Caco-2 (cell line): ENCODE measurements at regions of chr14 and their contacts with region 1.

Region 1: GRCh38 chr14:82447586-82447985 is 913.9 kb upstream of the SEL1L start:
- DNase-seq: peak; percentile 25 to 33
- H3K4me3 ChIP-seq: no peak overlapping the region
- H3K4me3 Mint-ChIP-seq: no peak overlapping the region
- H3K27ac Mint-ChIP-seq: no peak overlapping the region
- H3K4me1 ChIP-seq: no peaks in the 10 kb centered on the region
- H3K4me1 Mint-ChIP-seq: no peaks in the 10 kb centered on the region
- H3K27me3 ChIP-seq: no peaks in the 10 kb centered on the region
- H3K27me3 Mint-ChIP-seq: no peaks in the 10 kb centered on the region
- CTCF ChIP-seq: peak in 1 of 2 experiments; percentile 25

Region 2: DNA sequence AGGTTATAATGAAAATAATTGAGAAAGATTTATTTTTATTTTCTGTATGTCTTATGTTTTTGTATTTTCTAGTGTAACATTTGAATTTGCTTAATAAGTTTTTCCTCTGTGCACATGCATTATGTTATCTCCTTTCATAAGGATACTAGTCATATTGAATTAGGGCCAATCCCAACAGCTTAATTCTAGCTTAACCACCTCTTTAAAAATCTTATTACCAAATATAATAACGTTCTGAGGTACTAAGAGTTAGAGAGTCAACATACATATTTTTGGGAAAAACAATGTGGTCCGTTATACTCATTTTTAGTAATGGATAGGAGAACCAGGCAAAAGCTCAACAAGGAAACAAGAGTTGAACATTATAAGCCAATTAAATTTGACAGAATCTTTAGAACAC is 68.3 kb before region 1 on chr14:
- CTCF ChIA-PET with region 1: no interaction called
- POLR2A ChIA-PET with region 1: no interaction called
- intact Hi-C with region 1: no loop called
- DNase-seq: no peak
- H3K4me3 ChIP-seq: no peak overlapping the region
- H3K4me3 Mint-ChIP-seq: no peak overlapping the region
- H3K27ac Mint-ChIP-seq: no peak overlapping the region
- H3K4me1 ChIP-seq: no peaks in the 10 kb centered on the region
- H3K4me1 Mint-ChIP-seq: no peaks in the 10 kb centered on the region
- H3K27me3 ChIP-seq: no peaks in the 10 kb centered on the region
- H3K27me3 Mint-ChIP-seq: no peaks in the 10 kb centered on the region
- CTCF ChIP-seq: no peak

Region 3: DNA sequence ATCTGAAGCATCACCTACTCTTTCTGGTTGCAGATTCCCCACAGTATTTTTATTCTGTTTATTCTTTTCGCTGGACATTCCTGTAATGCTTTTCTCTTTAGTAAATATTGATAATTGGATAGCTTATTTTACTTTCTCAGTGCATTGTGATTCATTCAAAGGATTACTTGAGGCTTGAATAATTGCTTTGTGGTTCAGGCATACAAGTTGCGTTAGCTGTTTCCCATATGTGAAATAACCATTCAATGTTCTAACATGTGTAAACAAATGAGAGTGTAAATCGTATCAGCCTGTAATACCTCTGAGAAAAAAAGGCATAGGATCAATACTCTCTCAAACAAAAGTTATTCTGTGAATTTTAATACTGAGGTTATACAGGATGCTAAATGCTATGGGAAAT is 90.2 kb after region 1 on chr14:
- CTCF ChIA-PET with region 1: no interaction called
- POLR2A ChIA-PET with region 1: no interaction called
- intact Hi-C with region 1: loop called (anchors 5 kb)
- DNase-seq: no peak
- H3K4me3 ChIP-seq: no peak overlapping the region
- H3K4me3 Mint-ChIP-seq: no peak overlapping the region
- H3K27ac Mint-ChIP-seq: no peak overlapping the region
- H3K4me1 ChIP-seq: peaks cover 4% of the 10 kb centered on the region; the same call in 1 of the 2 replicates
- H3K4me1 Mint-ChIP-seq: no peaks in the 10 kb centered on the region
- H3K27me3 ChIP-seq: no peaks in the 10 kb centered on the region
- H3K27me3 Mint-ChIP-seq: no peaks in the 10 kb centered on the region
- CTCF ChIP-seq: no peak

Region 4: DNA sequence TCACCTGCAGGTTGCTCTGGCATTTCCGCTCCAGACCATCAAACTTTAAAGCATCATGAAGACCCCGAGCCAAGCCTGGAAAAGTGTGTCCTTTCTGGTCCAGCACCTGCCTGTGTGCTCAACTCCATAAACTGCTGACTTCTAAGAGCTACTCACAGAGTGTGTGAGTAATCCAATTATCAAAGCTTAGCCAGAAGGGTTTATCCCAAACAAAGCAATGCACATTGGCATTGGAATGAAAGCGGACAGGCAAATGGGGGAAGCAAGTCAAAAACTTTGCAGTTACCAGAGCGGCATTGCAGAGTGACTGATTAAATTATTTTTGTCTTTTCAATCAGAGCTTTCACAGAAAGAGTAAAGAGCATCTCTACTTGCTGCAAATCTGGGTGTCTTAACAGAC is 348.5 kb after region 1 on chr14:
- CTCF ChIA-PET with region 1: no interaction called
- POLR2A ChIA-PET with region 1: no interaction called
- intact Hi-C with region 1: no loop called
- DNase-seq: no peak
- H3K4me3 ChIP-seq: no peak overlapping the region
- H3K4me3 Mint-ChIP-seq: no peak overlapping the region
- H3K27ac Mint-ChIP-seq: no peak overlapping the region
- H3K4me1 ChIP-seq: no peaks in the 10 kb centered on the region
- H3K4me1 Mint-ChIP-seq: no peaks in the 10 kb centered on the region
- H3K27me3 ChIP-seq: no peaks in the 10 kb centered on the region
- H3K27me3 Mint-ChIP-seq: peaks cover 12% of the 10 kb centered on the region
- CTCF ChIP-seq: no peak